Heart left ventricle (tissue), 16 donors: ENCODE measurements at regions of chr10 and their contacts with region 1.

Region 1: DNA sequence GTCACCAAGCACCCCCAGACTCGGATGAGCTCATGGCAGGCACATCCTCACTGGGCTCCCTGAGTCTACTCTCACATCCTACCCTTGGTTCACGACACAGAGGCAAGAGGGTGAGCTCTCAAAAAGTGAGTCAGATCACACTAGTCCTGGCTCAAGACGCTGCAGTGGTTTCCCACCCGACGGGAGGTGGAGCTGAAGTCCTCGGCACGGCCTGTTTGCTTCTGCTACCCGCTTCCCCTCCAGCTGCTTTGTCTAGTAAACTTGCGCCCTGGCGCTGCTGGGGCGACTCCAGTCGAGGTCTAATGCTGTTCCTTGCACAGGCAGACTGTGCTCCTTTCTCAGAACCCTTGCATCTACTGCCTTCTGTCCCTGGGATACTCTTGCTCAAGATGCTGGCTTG is 13.5 kb upstream of the SFMBT2 start:
- DNase-seq: no peak
- ATAC-seq: no peak
- H3K4me3 ChIP-seq: no peak overlapping the region
- H3K27ac ChIP-seq: no peak overlapping the region
- H3K4me1 ChIP-seq: no peaks in the 10 kb centered on the region
- H3K27me3 ChIP-seq: peaks cover 0 to 22% (median 0%) of the 10 kb centered on the region in 9 donors
- CTCF ChIP-seq: no peak
- POLR2A ChIP-seq: no peak

Region 2: DNA sequence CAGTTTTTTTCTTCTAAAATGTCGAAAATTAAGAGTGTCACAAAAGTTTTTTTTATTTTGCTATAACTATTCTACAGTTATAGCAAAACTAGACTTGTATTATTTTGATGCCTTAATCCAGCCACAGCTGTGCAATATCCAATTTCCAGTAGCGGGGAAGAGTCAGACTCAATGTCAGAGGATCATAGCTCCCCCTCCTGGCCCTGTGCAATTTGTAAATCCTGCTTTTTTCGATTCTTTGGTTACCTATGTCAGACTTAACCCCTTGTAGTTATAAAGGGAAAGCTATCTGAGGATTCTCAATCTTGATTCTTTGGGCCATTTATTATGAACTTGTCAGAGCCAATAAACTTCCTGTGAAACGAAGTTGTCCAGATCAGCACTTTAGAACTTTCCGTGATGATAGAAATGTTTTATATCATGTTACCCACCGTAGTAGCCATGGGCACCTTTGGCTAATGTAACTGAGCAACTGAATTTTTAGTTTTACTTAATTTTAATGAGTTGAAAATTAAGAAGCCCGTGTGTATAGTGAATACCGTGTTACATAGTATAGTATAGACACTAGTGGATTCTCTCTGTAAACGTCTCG is 756.5 kb before region 1 on chr10:
- intact Hi-C with region 1: loop called in 7 of 10 experiments (anchors 5 to 10 kb)
- DNase-seq: no peak
- ATAC-seq: no peak
- H3K4me3 ChIP-seq: no peak overlapping the region
- H3K27ac ChIP-seq: no peak overlapping the region
- H3K4me1 ChIP-seq: peaks cover 0 to 7% (median 0%) of the 10 kb centered on the region in 12 donors
- H3K27me3 ChIP-seq: peaks cover 0 to 27% (median 0%) of the 10 kb centered on the region in 9 donors
- CTCF ChIP-seq: peak in 11 of 12 donors; percentile 13 to 56 (median 30)
- POLR2A ChIP-seq: no peak

Region 3: GRCh38 chr10:6920072-6921019 is 504.0 kb before region 1 on chr10:
- intact Hi-C with region 1: loop called in 6 of 10 experiments (anchors 5 to 10 kb)
- DNase-seq: peak; percentile 53 to 86 (median 69)
- ATAC-seq: peak; percentile 73 to 95 (median 92)
- H3K4me3 ChIP-seq: peak overlapping the region in 1 of 12 donors; percentile 7
- H3K27ac ChIP-seq: no peak overlapping the region
- H3K4me1 ChIP-seq: peaks cover 0 to 19% (median 1%) of the 10 kb centered on the region in 12 donors
- H3K27me3 ChIP-seq: peaks cover 0 to 3% (median 0%) of the 10 kb centered on the region in 9 donors
- CTCF ChIP-seq: peak; percentile 28 to 69 (median 59)
- POLR2A ChIP-seq: no peak

Region 4: GRCh38 chr10:7121154-7121810 is 303.0 kb before region 1 on chr10:
- intact Hi-C with region 1: loop called in 5 of 10 experiments (anchors 5 kb)
- DNase-seq: peak in 4 of 5 donors; percentile 28 to 45 (median 40)
- ATAC-seq: peak in 3 of 4 donors; percentile 60 to 66 (median 61)
- H3K4me3 ChIP-seq: no peak overlapping the region
- H3K27ac ChIP-seq: no peak overlapping the region
- H3K4me1 ChIP-seq: peaks cover 0 to 2% (median 0%) of the 10 kb centered on the region in 12 donors
- H3K27me3 ChIP-seq: peaks cover 0 to 12% (median 0%) of the 10 kb centered on the region in 9 donors
- CTCF ChIP-seq: peak; percentile 48 to 75 (median 68)
- POLR2A ChIP-seq: no peak